ENCODE measurements at regions of chr5 and their contacts with region 1.

Region 1: GRCh38 chr5:142874537-142874936 is 104.4 kb downstream of the ARHGAP26 start:
- DNase-seq: no peak
- H3K4me3 ChIP-seq: no peak overlapping the region
- H3K27ac ChIP-seq: no peak overlapping the region
- H3K4me1 ChIP-seq: peaks cover 0 to 3% (median 2%) of the 10 kb centered on the region in 4 experiments; a peak in 2 of 7 replicates
- H3K27me3 ChIP-seq: no peaks in the 10 kb centered on the region
- CTCF ChIP-seq: no peak
- EP300 ChIP-seq: no peak
- POLR2A ChIP-seq: no peak
- RAD21 ChIP-seq: no peak

Region 2: DNA sequence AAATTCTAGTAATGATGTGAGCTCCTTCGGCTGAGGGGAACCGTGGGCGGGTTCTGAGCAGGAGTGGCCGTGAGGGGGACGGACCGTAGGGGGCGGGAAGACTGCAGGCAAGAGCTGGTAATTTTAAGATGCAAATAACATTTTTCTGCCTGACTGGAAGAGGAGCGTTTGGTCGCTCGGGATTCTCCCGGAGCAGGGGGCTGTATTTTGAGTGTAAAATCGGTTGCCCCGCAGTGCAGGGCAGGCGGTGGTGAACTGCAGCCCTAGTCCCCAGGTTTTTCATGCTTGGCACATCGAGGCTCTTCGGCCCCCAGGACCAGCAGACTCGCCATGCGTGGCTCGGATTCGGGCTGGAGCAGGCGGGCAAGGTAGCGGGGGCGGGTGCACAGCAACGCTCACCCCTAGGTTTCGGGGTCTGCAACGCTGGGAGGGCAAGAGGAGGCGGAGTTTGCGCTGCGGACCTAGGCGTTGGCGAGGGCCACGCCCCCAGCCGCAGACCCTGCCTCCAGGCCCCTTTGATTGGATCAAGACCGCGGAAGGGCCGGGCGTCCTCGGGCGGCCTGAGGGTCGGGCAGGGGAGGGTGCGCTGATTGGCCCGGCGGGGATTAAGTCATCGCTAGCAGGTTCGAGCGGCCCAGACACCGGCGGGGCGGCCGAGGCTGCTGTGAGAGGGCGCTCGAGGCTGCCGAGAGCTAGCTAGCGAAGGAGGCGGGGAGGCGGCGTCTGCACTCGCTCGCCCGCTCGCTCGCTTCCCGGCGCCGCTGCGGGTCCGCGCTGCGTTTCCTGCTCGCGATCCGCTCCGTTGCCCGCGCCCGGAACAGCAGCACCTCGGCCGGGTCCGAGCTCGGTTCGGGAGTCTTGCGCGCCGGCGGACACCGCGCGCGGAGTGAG is 104.6 kb before region 1 on chr5 and contains the start of gene ARHGAP26:
- CTCF ChIA-PET with region 1: interaction called, 79 read pairs
- POLR2A ChIA-PET with region 1: interaction called, 3 read pairs
- DNase-seq: peak; percentile 93 to 94
- H3K4me3 ChIP-seq: peak within 1 kb of the TSS; percentile 77 to 91 (median 83)
- H3K27ac ChIP-seq: no peak within 1 kb of the TSS; the same call in 1 of the 2 replicates
- H3K4me1 ChIP-seq: peaks cover 0 to 10% (median 5%) of the 10 kb centered on the region in 4 experiments; a peak in 6 of 7 replicates
- H3K27me3 ChIP-seq: peaks cover 0 to 8% (median 2%) of the 10 kb centered on the region in 4 experiments; a peak in 4 of 7 replicates
- CTCF ChIP-seq: peak in 2 of 3 experiments; percentile 16 to 17; a peak in 3 of 4 replicates
- EP300 ChIP-seq: no peak
- POLR2A ChIP-seq: peak; percentile 85 to 87
- RAD21 ChIP-seq: peak; percentile 11 to 25; a peak in 2 of 4 replicates
- total RNA-seq, gene ARHGAP26: 20.6 and 24.8 TPM in 2 replicates

Region 3: GRCh38 chr5:142816531-142817430 is 57.8 kb before region 1 on chr5:
- CTCF ChIA-PET with region 1: no interaction called
- POLR2A ChIA-PET with region 1: no interaction called
- DNase-seq: no peak
- H3K4me3 ChIP-seq: no peak overlapping the region
- H3K27ac ChIP-seq: no peak overlapping the region
- H3K4me1 ChIP-seq: peaks cover 0 to 8% (median 6%) of the 10 kb centered on the region in 4 experiments; a peak in 4 of 7 replicates
- H3K27me3 ChIP-seq: no peaks in the 10 kb centered on the region
- CTCF ChIP-seq: no peak
- EP300 ChIP-seq: no peak
- POLR2A ChIP-seq: no peak
- RAD21 ChIP-seq: no peak

Region 4: DNA sequence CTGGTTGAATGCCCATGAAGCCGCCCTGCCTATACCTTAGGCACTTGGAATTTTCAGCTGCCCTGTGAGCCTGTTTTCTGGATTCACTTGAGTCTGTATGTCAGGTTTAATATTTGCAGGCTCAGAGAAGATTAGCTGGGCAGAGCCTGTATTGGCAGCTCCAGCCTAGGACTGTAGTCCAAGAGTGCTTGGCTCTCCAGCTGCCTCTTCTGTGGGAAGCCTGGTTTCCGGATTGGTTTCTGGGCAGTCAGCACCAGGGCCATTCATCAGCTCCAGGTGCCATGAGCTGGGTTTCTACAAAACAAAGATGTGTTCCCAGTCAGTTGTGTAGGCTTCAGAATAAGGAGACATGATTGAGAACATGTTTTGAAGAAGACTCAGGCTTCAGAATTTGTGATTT is 14.3 kb before region 1 on chr5:
- CTCF ChIA-PET with region 1: interaction called, 28 read pairs
- POLR2A ChIA-PET with region 1: no interaction called
- DNase-seq: no peak
- H3K4me3 ChIP-seq: no peak overlapping the region
- H3K27ac ChIP-seq: no peak overlapping the region
- H3K4me1 ChIP-seq: peaks cover 15 to 33% (median 20%) of the 10 kb centered on the region in 4 experiments
- H3K27me3 ChIP-seq: no peaks in the 10 kb centered on the region
- CTCF ChIP-seq: no peak
- EP300 ChIP-seq: no peak
- POLR2A ChIP-seq: no peak
- RAD21 ChIP-seq: no peak

Measured in H1 (cell line).